ENCODE measurements at regions of chr17 and their contacts with region 1.

Region 1: DNA sequence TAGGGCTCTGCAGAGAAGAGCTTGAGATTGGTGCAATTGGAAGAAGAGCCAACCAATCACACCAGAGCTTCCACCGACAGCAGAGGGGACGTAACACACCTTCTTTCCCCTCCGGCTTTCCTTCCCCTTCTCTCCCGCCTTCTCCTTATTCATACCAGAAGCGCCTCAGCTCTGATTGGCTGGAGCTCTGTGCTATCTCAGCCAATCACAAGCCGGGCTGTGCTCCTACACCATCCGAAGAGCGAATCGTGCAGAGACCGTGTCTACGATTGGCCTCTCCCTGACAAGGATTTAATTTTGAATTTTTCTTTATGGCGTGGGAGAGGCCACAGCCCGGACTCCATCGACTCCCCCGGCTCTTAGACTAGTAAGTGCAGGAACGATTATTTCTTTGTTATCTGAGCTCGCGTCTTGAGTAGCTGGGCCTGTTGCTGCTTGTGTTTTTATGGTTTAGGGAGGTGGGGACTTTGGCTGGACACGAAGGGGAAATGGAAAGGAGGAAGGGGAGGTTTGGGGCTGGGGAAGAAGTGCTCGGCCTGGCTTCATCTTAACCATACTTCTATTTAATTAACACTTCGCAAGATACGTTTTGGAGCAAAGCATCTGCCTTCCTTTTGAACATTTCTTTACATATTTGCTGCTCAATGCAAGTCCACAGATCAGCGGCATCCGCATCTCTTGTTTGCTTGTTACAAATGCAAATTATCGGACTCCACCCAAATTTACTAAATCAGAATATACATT is at the start of gene PRR11:
- DNase-seq: no peak

Region 2: GRCh38 chr17:59139939-59140338 is 15.7 kb before region 1 on chr17:
- CTCF ChIA-PET with region 1: no interaction called
- POLR2A ChIA-PET with region 1: interaction called, 11 read pairs
- DNase-seq: no peak

Region 3: DNA sequence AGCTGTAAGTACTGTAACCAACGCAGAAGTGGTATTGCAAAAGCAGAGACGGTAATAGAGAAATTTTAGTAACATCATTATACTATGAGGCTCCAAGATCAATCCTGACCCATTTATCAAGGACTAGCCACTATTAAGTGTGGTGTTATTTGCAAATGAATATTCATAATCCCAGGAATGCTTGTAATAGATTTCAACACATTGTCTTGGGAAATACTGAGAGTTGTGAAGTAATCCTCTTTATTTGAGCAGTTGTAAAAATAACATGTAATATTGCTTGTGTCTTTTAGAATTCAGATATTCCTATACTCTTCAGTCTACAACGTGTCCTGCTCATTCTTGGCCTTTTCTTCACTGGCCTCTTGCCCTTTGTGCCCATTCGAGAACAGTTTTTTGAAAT is 111.1 kb after region 1 on chr17:
- CTCF ChIA-PET with region 1: no interaction called
- POLR2A ChIA-PET with region 1: no interaction called
- DNase-seq: no peak

Region 4: DNA sequence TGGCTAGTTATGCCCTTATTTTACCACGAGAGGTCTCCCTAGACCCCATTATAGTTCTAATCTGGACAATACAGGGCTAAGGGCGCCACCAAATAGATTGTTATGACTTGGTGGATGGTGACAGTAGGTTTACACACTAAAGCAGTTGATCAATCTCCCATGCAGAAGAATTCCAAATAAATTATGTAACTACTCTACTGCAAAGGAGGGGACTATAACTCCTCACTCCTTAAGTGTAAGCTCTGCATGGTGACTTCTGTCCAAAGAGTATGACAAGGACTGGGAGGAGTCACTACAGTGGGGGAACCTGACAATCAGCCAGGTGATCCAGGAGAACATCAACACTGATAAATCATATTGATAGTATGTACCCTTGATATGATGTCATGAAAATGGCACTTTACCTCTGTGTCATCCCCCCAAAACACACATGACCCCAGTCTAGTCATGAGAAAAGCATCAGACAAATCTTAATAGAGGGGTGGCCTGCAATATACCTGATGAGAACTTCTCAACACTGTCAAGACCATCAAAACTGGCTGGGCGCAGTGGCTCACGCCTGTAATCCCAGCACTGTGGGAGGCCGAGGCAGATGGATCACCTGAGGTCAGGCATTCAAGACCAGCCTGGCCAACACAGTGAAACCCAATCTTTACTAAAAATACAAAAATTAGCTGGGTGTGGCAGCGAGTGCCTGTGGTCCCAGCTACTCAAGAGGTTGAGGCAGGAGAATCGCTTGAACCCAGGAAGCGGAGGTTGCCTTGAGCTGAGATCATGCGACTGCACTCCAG is 155.7 kb after region 1 on chr17:
- CTCF ChIA-PET with region 1: no interaction called
- POLR2A ChIA-PET with region 1: no interaction called
- DNase-seq: peak; percentile 73